GM12878 (cell line): ENCODE measurements at regions of chr12 and their contacts with region 1.

Region 1: DNA sequence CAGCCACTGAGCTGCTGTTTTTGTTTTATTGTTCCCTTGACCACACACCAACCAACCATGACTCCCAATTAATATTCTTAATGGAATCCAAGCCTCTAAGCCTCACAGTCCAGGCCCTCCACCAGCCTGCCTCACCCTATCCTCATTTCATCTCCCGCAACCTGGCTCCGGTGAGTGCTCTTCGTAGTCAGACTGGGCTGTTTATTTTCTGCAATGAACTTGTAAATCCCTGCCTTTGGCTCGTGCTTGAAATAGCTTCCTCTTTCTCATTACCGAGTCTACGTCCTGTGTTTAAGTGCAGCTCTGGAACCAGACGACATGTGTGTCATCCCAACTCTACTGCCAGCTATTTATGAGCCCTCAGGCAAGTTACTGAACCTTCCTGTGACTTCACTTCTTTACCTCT is 12.4 kb upstream of the ETFBKMT start:
- DNase-seq: no peak
- ATAC-seq: no peak
- H3K4me3 ChIP-seq: no peak overlapping the region
- H3K27ac ChIP-seq: no peak overlapping the region
- H3K4me1 ChIP-seq: no peaks in the 10 kb centered on the region
- H3K27me3 ChIP-seq: no peaks in the 10 kb centered on the region
- CTCF ChIP-seq: no peak
- EP300 ChIP-seq: no peak
- POLR2A ChIP-seq: no peak
- RAD21 ChIP-seq: no peak

Region 2: DNA sequence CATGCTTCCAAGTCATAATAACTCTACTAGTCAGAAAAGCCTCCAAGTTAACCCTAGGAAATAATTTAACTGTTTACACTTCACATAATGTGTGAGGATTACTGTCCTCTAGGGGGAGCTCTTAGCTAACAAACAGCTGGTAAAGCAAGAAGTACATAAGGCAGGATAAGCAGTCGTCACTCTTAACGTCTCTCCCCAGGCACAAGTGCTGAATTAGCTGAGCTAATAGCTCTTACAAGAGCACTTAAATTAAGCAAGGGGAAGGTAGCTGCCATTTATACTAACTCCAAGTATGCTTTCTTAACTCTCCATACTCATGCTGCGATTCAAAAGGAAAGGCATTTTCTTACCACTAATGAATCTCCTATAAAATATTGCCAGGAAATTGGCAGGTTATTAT is 799.8 kb before region 1 on chr12:
- CTCF ChIA-PET with region 1: no interaction called
- POLR2A ChIA-PET with region 1: no interaction called
- RAD21 ChIA-PET with region 1: no interaction called
- SMC1A ChIA-PET with region 1: no interaction called
- in situ Hi-C with region 1: loop called (anchors 10 kb)
- intact Hi-C with region 1: no loop called
- DNase-seq: peak; percentile 28
- ATAC-seq: peak; percentile 53
- H3K4me3 ChIP-seq: no peak overlapping the region
- H3K27ac ChIP-seq: no peak overlapping the region
- H3K4me1 ChIP-seq: peaks cover 3% of the 10 kb centered on the region
- H3K27me3 ChIP-seq: no peaks in the 10 kb centered on the region
- CTCF ChIP-seq: peak; percentile 58 to 72 (median 60); a peak in 5 of 6 replicates
- EP300 ChIP-seq: no peak
- POLR2A ChIP-seq: no peak
- RAD21 ChIP-seq: peak; percentile 91

Region 3: GRCh38 chr12:31406345-31406744 is 240.7 kb before region 1 on chr12:
- CTCF ChIA-PET with region 1: interaction called, 37 read pairs
- POLR2A ChIA-PET with region 1: no interaction called
- RAD21 ChIA-PET with region 1: interaction called, 15 read pairs
- SMC1A ChIA-PET with region 1: interaction called, 23 read pairs
- in situ Hi-C with region 1: no loop called
- intact Hi-C with region 1: loop called (anchors 5 kb)
- DNase-seq: peak; percentile 65
- ATAC-seq: peak; percentile 77
- H3K4me3 ChIP-seq: peak overlapping the region; percentile 15
- H3K27ac ChIP-seq: peak overlapping the region; percentile 85
- H3K4me1 ChIP-seq: peaks cover 40% of the 10 kb centered on the region
- H3K27me3 ChIP-seq: no peaks in the 10 kb centered on the region
- CTCF ChIP-seq: no peak
- EP300 ChIP-seq: peak in 1 of 2 experiments; percentile 36; a peak in 1 of 4 replicates
- POLR2A ChIP-seq: no peak
- RAD21 ChIP-seq: peak; percentile 31

Region 4: GRCh38 chr12:32062881-32063280 is 415.8 kb after region 1 on chr12:
- CTCF ChIA-PET with region 1: interaction called, 3 read pairs
- POLR2A ChIA-PET with region 1: no interaction called
- RAD21 ChIA-PET with region 1: no interaction called
- SMC1A ChIA-PET with region 1: no interaction called
- in situ Hi-C with region 1: no loop called
- intact Hi-C with region 1: loop called (anchors 2 kb)
- DNase-seq: no peak
- ATAC-seq: peak; percentile 45
- H3K4me3 ChIP-seq: no peak overlapping the region
- H3K27ac ChIP-seq: no peak overlapping the region
- H3K4me1 ChIP-seq: peaks cover 2% of the 10 kb centered on the region; the same call in 1 of the 2 replicates
- H3K27me3 ChIP-seq: no peaks in the 10 kb centered on the region
- CTCF ChIP-seq: 0 out of 6 replicates have a peak, but pooled peaks of 1 of the 3 experiments have one; percentile 3
- EP300 ChIP-seq: no peak
- POLR2A ChIP-seq: no peak
- RAD21 ChIP-seq: no peak

Region 5: DNA sequence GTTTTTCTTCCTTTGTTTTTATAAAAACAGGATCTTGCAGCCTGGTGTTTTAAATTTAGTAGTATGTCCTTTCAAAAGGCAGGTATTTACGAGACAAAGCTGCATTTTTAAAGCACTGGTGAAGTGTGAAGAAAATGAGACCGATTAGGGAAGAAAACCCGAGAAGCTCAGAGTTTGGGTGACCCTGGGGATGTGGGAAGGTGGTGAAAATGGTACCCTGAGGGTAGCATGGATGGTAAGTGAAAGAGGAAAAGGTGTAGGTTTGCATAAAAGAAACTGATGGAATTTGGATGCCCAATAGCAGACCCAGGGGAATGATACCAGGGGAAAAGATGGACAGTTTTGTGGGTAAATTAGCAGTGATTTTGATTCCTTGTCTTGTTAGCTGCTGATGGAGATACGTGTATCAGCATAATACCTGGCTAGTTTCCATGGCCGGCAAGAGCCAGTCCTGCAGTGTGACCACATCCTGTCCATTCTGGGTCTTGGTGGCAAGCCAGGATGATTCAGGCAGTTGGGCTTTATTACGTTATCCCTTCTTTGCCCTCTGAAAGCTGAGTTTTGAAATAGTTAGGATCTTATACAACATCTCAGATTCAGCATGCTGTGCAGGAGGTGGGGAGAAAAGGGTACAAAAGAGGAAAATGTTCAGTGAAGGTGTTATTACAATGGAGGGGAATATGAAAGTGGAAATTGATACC is 468.5 kb after region 1 on chr12:
- CTCF ChIA-PET with region 1: no interaction called
- POLR2A ChIA-PET with region 1: no interaction called
- RAD21 ChIA-PET with region 1: no interaction called
- SMC1A ChIA-PET with region 1: no interaction called
- in situ Hi-C with region 1: no loop called
- intact Hi-C with region 1: no loop called
- DNase-seq: no peak
- ATAC-seq: peak; percentile 83
- H3K4me3 ChIP-seq: no peak overlapping the region
- H3K27ac ChIP-seq: no peak overlapping the region
- H3K4me1 ChIP-seq: peaks cover 11% of the 10 kb centered on the region; the same call in 1 of the 2 replicates
- H3K27me3 ChIP-seq: no peaks in the 10 kb centered on the region
- CTCF ChIP-seq: no peak
- EP300 ChIP-seq: no peak
- POLR2A ChIP-seq: no peak
- RAD21 ChIP-seq: no peak

Region 6: GRCh38 chr12:32312049-32312670 is 665.1 kb after region 1 on chr12:
- CTCF ChIA-PET with region 1: interaction called, 74 read pairs
- POLR2A ChIA-PET with region 1: no interaction called
- RAD21 ChIA-PET with region 1: no interaction called
- SMC1A ChIA-PET with region 1: no interaction called
- in situ Hi-C with region 1: loop called (anchors 5 kb)
- intact Hi-C with region 1: no loop called
- DNase-seq: peak; percentile 21
- ATAC-seq: peak; percentile 77
- H3K4me3 ChIP-seq: no peak overlapping the region
- H3K27ac ChIP-seq: no peak overlapping the region
- H3K4me1 ChIP-seq: no peaks in the 10 kb centered on the region
- H3K27me3 ChIP-seq: no peaks in the 10 kb centered on the region
- CTCF ChIP-seq: peak; percentile 39 to 63 (median 56); a peak in 5 of 6 replicates
- EP300 ChIP-seq: no peak
- POLR2A ChIP-seq: no peak
- RAD21 ChIP-seq: peak; percentile 62

Region 7: GRCh38 chr12:32671930-32672780 is 1025.1 kb after region 1 on chr12:
- CTCF ChIA-PET with region 1: interaction called, 8 read pairs
- POLR2A ChIA-PET with region 1: no interaction called
- RAD21 ChIA-PET with region 1: no interaction called
- SMC1A ChIA-PET with region 1: interaction called, 14 read pairs
- in situ Hi-C with region 1: no loop called
- intact Hi-C with region 1: loop called (anchors 5 kb)
- DNase-seq: no peak
- ATAC-seq: peak; percentile 74
- H3K4me3 ChIP-seq: no peak overlapping the region
- H3K27ac ChIP-seq: no peak overlapping the region
- H3K4me1 ChIP-seq: peaks cover 10% of the 10 kb centered on the region
- H3K27me3 ChIP-seq: no peaks in the 10 kb centered on the region
- CTCF ChIP-seq: peak; percentile 56 to 76 (median 72); a peak in 5 of 6 replicates
- EP300 ChIP-seq: no peak
- POLR2A ChIP-seq: no peak
- RAD21 ChIP-seq: peak; percentile 87

Region 8: DNA sequence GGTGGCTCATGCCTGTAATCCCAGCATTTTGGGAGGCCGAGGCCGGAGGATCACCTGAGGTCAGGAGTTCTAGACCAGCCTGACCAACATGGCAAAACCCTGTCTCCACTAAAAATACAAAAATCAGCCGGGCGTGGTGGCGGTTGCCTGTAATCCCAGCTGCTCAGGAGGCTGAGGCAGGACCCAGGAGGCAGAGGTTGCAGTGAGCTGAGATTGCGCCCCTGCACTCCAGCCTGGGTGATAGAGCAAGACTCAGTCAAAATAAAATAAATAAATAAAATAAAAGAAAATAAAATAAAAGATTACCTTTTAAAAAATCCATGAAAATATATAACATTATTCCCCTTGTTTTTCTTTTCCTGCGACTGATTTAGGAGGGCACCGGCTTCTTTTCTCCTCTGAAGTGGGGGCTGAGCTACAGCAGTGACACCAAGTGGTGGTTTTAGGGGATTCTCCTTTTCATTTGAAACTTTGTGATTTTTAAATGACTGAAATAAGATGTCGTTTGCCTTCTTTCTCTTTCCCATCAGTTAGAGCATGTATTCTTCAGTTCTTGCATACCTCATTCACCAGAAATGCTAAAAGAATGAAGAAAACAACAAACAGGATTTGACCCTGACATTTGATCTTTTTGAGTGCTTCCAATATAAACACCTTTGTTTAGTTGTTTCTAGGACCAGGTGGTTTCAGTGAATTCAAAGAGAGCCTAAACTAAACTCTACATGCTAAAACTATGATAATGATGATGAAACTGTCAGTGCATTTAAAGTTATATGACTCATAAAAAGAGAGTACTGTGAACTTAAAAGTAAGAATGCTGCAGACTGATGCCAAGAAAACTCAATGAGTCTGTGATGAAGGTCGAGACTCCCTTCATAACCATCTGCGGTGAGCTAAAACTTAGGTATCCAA is 1272.1 kb after region 1 on chr12:
- CTCF ChIA-PET with region 1: no interaction called
- POLR2A ChIA-PET with region 1: no interaction called
- RAD21 ChIA-PET with region 1: no interaction called
- SMC1A ChIA-PET with region 1: no interaction called
- in situ Hi-C with region 1: loop called (anchors 25 kb)
- intact Hi-C with region 1: loop called (anchors 5 kb)
- DNase-seq: no peak
- ATAC-seq: peak; percentile 61
- H3K4me3 ChIP-seq: no peak overlapping the region
- H3K27ac ChIP-seq: no peak overlapping the region
- H3K4me1 ChIP-seq: no peaks in the 10 kb centered on the region
- H3K27me3 ChIP-seq: no peaks in the 10 kb centered on the region
- CTCF ChIP-seq: peak; percentile 44 to 56 (median 47); a peak in 5 of 6 replicates
- EP300 ChIP-seq: no peak
- POLR2A ChIP-seq: no peak
- RAD21 ChIP-seq: peak; percentile 78